ENCODE measurements at regions of chr17 and their contacts with region 1.

Region 1: GRCh38 chr17:42067351-42068091 is 17.1 kb upstream of the C17orf113 start:
- DNase-seq: no peak
- H3K4me3 ChIP-seq: no peak overlapping the region
- H3K27ac ChIP-seq: no peak overlapping the region
- H3K27me3 ChIP-seq: peaks cover 43% of the 10 kb centered on the region
- CTCF ChIP-seq: peak; percentile 85

Region 2: GRCh38 chr17:42055496-42055895 is 12.0 kb before region 1 on chr17:
- CTCF ChIA-PET with region 1: interaction called, 12 read pairs
- POLR2A ChIA-PET with region 1: no interaction called
- DNase-seq: no peak
- H3K4me3 ChIP-seq: no peak overlapping the region
- H3K27ac ChIP-seq: no peak overlapping the region
- H3K27me3 ChIP-seq: peaks cover 74% of the 10 kb centered on the region
- CTCF ChIP-seq: no peak

Region 3: GRCh38 chr17:42101513-42102319 is 34.2 kb after region 1 on chr17:
- CTCF ChIA-PET with region 1: interaction called, 11 read pairs
- POLR2A ChIA-PET with region 1: no interaction called
- DNase-seq: peak; percentile 13
- H3K4me3 ChIP-seq: no peak overlapping the region
- H3K27ac ChIP-seq: no peak overlapping the region
- H3K27me3 ChIP-seq: peaks cover 34% of the 10 kb centered on the region
- CTCF ChIP-seq: peak; percentile 80

Region 4: DNA sequence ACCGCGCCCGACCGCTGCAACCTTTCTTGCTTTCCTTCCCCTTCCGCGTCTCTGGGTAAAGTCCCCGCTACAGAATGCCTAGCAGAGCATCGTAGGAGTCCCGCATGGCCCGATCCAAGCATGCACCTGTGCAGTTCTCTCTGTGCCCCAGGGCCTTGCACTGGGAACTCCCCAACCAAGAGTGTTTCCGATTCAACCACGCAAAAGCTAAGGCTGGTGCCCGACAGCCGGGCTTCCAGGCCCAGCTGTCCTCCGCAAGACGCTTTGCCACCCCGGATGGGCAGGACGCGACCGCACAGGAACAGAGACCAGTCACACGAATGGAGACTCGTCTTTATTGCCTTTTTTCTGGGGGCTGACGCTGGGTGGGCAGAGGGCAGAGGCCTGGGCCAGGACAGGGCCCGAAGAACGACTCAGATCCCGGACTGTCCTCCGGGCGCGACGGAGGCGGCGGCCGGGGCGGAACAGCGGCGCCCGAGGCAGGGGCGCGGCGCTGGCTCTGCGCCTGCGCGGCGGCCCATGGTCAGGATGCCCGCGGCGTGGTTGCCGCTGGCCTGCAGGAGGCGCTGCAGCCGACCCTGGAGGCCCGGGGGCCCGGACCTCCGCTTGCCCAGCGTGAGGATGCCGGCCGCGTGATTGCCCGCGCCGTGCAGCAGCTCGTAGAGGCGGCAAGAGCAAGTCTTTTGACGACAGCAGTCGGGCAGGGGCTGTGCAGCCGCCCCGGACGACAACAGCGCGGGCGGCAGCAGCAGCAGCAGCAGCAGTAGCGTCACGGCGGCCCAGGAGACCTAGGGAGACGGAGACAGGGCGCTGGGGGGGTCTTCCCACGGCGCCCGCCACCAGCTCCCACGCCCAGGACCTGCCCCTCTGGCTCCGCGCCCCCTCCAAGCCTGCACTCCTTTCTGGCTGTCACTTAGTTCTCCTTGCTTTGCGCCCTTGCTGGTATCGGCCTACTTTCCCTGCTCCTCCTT is 116.5 kb after region 1 on chr17:
- CTCF ChIA-PET with region 1: no interaction called
- POLR2A ChIA-PET with region 1: no interaction called
- DNase-seq: peak; percentile 21
- H3K4me3 ChIP-seq: peak overlapping the region; percentile 63
- H3K27ac ChIP-seq: no peak overlapping the region
- H3K27me3 ChIP-seq: peaks cover 30% of the 10 kb centered on the region
- CTCF ChIP-seq: peak; percentile 65